ENCODE measurements at regions of chr4 and their contacts with region 1.

Region 1: GRCh38 chr4:72094059-72094797 is 62.4 kb downstream of the NPFFR2 start:
- DNase-seq: peak; percentile 58

Region 2: GRCh38 chr4:72073816-72074215 is 20.4 kb before region 1 on chr4:
- intact Hi-C with region 1: loop called in 1 of 2 experiments (anchors 1 kb)
- DNase-seq: no peak